ENCODE measurements at regions of chr9 and their contacts with region 1.

Region 1: GRCh38 chr9:130672466-130672865 is 8.1 kb downstream of the PRDM12 start:
- DNase-seq: no peak

Region 2: DNA sequence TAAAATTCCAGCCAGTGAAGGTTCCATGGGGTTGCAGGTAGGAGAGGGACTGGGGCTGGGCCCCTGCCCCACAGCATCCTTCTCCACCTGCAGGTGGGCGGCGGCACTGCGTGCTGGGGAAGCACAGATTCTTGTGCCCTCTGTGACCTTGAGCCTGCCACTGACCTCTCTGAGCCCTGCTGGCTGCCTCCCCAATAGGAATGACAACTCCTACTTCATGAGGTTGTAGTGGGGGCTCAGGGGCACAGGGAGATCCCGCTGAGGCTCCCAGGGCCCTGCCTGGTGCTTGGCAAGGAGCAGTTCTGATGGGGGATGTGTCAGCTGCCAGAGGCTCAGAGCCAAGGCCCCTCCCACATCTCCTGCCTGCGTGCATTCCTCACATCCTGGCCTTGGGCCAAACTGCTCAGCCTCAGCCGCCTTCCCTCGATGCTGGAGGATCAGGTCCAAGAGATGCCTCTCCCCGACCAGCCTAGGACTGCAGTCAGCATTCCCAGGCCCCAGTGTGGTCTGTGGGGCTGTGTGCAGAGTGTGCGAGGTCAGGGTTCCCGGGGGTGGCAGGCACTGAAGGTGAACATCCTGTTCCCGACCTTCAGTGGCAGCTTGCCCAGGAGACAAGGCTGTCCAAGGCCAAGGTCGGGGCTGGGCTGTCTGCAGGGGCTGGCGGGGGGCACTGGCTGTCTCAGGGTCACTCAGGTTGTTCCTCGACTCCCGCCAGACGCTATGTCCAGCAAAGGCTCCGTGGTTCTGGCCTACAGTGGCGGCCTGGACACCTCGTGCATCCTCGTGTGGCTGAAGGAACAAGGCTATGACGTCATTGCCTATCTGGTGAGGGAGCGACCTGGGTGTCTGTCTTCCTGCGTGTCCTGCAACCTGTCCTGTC is 220.7 kb before region 1 on chr9:
- in situ Hi-C with region 1: loop called (anchors 10 kb)
- DNase-seq: peak; percentile 54

Region 3: DNA sequence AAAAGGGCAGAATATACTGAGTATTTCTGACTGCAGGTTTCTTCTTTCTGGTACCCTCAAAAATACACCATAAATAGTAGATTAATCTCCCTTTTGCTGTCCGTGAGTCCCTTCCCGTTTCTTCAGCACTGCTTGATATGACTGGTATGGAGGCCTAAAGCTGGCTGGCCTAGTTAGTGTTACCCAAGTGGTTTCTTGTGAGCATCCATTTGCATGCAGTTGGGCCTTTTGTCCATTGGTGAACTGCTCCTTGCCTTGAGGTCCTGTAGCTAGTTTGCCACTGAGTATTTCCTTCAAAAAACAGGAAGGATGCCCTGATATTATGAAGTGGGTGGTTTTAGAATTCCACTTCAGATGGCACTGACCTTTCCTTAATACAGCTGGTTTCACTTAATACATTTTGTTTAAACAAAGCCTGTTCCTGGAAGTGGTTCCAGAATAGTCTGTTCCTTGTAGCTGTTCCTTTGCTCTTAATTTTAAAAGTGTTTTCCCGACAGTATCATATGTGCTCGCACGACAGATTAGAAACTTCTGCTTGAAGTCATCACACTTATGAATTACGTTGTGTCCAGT is 122.5 kb after region 1 on chr9:
- in situ Hi-C with region 1: no loop called
- DNase-seq: no peak

Region 4: DNA sequence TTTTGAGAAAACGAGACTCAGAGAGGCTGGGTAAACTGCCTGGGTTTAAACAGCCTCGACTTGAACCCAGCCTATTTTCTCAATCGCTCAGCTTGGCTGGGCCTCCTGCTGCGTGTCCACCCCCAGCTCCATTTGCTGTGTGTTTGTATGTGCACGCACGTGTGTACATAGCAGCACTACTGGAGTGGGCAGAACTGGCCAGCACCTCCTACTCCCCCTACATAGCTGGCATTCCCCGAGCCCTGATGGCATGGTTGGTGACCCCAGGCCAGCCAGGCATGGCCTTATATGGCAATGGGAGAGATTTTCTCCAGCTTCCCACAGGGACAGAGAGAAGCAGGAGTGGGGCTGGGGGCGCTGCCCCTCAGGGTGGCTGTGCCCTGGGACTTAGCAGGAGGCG is 428.0 kb after region 1 on chr9:
- in situ Hi-C with region 1: no loop called
- DNase-seq: no peak

Measured in KBM-7 (cell line).